ENCODE measurements at regions of chr11 and their contacts with region 1.

Region 1: GRCh38 chr11:6022956-6023355 is 7.6 kb downstream of the OR56A1 start:
- DNase-seq: peak in 3 of 5 donors; percentile 14 to 64 (median 52)
- H3K4me3 ChIP-seq: no peak overlapping the region
- H3K27ac ChIP-seq: no peak overlapping the region
- H3K4me1 ChIP-seq: no peaks in the 10 kb centered on the region
- H3K27me3 ChIP-seq: no peaks in the 10 kb centered on the region
- CTCF ChIP-seq: peak; percentile 63

Region 2: GRCh38 chr11:5891216-5891800 is 131.6 kb before region 1 on chr11:
- intact Hi-C with region 1: no loop called
- DNase-seq: peak in 1 of 5 donors; percentile 9
- H3K4me3 ChIP-seq: no peak overlapping the region
- H3K27ac ChIP-seq: no peak overlapping the region
- H3K4me1 ChIP-seq: no peaks in the 10 kb centered on the region
- H3K27me3 ChIP-seq: no peaks in the 10 kb centered on the region
- CTCF ChIP-seq: no peak

Region 3: DNA sequence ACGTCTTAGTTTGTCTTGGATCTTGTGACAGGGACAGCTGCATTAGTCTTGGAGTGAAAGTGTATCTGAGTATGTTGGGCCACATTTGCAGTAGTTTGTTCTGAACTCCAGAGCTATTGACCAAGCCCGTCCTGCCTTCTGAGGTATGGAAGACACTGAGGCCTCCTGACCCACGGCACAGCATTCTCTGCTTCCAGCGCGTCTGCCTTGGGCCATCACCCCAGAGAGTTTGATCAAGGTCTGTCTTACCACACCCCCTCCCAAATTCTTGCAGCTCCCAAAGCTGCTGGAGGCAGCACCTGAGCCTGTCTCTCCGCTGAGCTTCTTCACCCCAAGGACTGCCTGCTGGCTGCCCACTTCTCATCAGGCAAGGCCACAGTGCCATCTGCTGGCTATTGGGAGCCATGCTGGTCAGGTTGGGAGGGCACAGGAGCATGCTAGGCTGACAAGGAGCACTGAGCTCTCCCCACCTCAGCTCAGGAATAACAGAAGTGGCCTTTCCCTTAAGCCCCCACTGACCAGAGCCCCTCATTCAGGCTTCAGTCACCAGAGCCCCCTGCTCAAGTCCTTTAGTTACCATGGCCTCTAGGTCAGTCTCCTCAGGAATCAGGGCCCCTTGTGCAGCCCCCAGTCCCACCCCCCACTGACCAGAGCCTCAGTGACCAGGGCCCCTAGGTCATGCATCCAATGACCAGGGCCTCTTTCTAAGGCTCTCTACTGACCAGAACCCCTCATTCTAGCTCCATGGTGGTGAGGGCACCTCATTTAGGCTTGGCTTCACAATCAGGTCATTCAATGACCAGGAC is 340.1 kb after region 1 on chr11:
- intact Hi-C with region 1: loop called (anchors 5 kb)
- DNase-seq: peak; percentile 77 to 89 (median 81)
- H3K4me3 ChIP-seq: no peak overlapping the region
- H3K27ac ChIP-seq: no peak overlapping the region
- H3K4me1 ChIP-seq: peaks cover 0 to 3% (median 0%) of the 10 kb centered on the region in 3 donors
- H3K27me3 ChIP-seq: no peaks in the 10 kb centered on the region
- CTCF ChIP-seq: peak; percentile 90